HEK293 (cell line): ENCODE measurements at regions of chr10 and their contacts with region 1.

Region 1: DNA sequence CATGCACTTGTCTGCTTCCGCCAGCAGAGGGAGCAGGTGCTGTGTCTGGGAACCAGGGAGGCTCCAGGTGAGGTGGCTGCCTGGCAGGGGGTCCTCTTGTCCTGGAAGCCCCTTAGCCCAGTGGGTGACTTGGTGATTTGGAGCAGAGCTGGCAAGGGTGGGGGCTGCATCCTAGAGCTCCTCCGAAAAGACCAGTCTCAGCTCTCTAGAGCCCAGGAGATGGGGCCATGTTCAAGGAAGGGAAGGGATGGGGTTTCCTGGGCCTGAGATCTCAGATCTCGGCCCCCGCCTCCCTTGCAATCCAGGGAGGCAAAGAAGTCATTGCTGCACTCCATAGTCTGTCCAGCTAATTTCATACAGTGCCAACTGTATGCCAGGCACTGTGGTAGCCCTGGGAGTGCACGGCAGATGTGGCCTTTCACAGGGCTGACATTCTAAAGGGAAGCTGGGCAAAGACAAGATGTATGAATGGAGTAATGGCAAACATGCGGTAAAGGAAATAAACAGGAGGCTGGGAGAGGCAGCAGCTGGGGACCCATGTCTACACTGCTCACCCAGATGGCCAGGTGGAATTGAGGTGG is 20.4 kb upstream of the SFRP5 start:
- H3K4me3 ChIP-seq: no peak overlapping the region
- H3K27ac ChIP-seq: no peak overlapping the region
- H3K4me1 ChIP-seq: no peaks in the 10 kb centered on the region
- CTCF ChIP-seq: peak; percentile 84

Region 2: GRCh38 chr10:97759158-97759887 is 32.9 kb before region 1 on chr10:
- CTCF ChIA-PET with region 1: interaction called, 12 read pairs
- POLR2A ChIA-PET with region 1: no interaction called
- H3K4me3 ChIP-seq: no peak overlapping the region
- H3K27ac ChIP-seq: no peak overlapping the region
- H3K4me1 ChIP-seq: no peaks in the 10 kb centered on the region
- CTCF ChIP-seq: peak; percentile 93

Region 3: DNA sequence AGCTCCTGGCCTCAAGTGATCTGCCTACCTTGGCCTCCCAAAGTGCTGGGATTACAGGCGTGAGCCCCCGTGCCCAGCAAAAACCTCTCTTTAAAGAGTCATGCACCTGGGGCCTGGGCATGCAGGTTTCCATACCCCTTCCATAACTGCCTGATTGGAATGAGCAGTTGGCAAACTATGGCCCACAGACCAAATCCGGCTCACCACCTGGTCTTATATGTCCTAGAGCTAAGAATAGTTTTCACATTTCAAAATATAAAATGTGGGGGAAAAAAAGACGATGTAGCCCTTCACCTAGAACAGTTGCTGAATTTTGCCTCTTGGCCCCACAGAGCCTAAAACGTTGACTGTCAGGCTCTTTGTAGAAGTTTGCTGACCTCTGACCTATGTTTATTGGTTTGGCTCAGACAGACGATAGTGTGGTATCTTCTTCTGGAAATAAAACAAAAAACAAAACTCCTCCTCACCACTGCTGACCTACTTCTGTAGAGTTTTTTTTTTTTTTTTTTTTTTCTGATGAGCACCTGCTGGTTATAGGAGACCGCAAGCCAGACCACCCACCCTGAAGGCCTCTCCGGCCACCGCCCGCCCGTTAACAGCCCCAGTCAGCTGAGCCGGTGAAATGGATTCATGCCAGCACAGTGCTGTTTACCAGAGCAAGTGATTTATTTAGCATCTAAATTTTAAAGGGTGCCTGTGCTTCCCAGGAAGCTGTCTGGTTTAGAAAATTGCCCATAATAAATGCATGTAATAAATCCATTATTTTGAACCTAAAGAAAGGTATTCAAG is 13.1 kb after region 1 on chr10:
- CTCF ChIA-PET with region 1: interaction called, 22 read pairs
- POLR2A ChIA-PET with region 1: no interaction called
- H3K4me3 ChIP-seq: no peak overlapping the region
- H3K27ac ChIP-seq: no peak overlapping the region
- H3K4me1 ChIP-seq: no peaks in the 10 kb centered on the region
- CTCF ChIP-seq: no peak

Region 4: GRCh38 chr10:97861097-97861750 is 69.0 kb after region 1 on chr10:
- CTCF ChIA-PET with region 1: interaction called, 13 read pairs
- POLR2A ChIA-PET with region 1: no interaction called
- H3K4me3 ChIP-seq: no peak overlapping the region
- H3K27ac ChIP-seq: no peak overlapping the region
- H3K4me1 ChIP-seq: no peaks in the 10 kb centered on the region
- CTCF ChIP-seq: no peak

Region 5: DNA sequence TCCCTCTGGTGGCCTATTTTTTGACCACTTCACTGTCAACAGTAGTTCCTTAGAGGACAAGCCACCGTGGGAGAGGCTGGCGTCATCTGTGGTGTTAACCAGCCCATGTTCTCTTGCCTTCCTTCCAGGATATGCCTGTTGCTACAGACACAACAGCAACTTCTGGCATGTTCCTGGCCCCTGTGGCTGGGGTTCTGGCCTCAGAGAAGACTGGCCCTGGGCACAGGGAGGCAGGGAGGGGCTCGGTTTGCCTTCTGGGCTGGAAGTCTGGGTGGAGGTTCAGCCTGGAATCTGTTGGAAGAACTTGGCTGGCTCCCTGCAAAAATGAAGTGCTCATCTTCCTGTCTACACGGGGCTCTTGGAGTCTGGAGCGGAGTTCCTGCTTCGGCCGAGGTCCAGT is 83.2 kb after region 1 on chr10:
- CTCF ChIA-PET with region 1: interaction called, 167 read pairs
- POLR2A ChIA-PET with region 1: no interaction called
- H3K4me3 ChIP-seq: no peak overlapping the region
- H3K27ac ChIP-seq: no peak overlapping the region
- H3K4me1 ChIP-seq: 0 out of 2 replicates have a peak, but pooled peaks cover 2% of the 10 kb centered on the region
- CTCF ChIP-seq: no peak